Pancreas (tissue), 10 donors: ENCODE measurements at regions of chr5 and their contacts with region 1.

Region 1: DNA sequence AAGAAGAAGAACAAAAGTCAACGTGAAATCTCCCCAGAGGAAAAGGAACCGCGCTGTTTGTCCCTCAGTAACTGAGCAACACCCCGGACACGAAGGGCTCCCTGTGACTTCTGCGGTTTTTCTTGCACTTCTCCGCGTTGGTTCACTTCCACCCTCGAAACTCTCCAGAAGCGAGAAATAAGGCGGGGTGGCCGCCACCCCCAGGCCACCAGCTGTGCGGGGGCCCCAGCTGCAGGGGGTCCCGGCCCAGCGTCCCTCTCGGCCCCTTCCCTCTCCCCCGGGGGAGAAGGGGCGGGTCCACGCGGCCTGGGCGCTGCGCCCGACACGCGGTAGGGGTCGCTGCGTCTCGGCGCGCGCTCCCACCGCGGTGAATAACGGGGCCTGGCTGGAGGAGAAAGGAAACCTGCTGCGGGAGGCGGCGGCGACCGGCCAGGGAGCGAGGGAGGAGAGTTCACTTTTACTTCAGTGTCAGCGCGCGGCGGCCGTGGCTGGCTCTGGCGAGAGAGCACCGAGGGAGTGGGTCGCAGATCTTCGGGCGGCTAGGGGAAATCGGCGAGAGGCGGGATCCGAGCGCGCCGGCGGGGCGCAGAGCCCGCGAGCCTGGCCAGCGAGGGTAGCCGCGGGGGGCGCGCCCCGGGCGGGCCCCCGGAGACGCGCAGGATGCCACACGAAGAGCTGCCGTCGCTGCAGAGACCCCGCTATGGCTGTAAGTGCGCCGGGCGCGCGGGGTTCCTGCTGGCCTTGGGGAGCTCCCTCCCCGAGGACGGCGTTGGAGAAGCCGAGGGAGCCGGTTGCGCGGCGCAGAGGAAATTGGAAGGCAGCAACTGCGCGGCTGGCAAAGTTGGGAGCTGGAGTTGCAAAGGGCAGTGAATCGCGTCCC is at the start of gene IQGAP2:
- DNase-seq: peak; percentile 74 to 91 (median 84)
- ATAC-seq: peak; percentile 73 to 84 (median 77)
- H3K4me3 ChIP-seq: peak within 1 kb of the TSS; percentile 68 to 87 (median 74)
- H3K27ac ChIP-seq: peak within 1 kb of the TSS; percentile 85 to 97 (median 93)
- H3K4me1 ChIP-seq: peaks cover 0 to 27% (median 21%) of the 10 kb centered on the region in 3 donors
- H3K27me3 ChIP-seq: no peaks in the 10 kb centered on the region
- CTCF ChIP-seq: peak; percentile 70 to 83 (median 74)
- total RNA-seq, gene IQGAP2: 32.1 to 54.0 (median 37.3) TPM

Region 2: GRCh38 chr5:76544268-76544926 is 141.3 kb after region 1 on chr5:
- intact Hi-C with region 1: loop called in 1 of 3 experiments (anchors 5 kb)
- DNase-seq: peak in 5 of 6 donors; percentile 62 to 82 (median 74)
- ATAC-seq: peak; percentile 84 to 87 (median 84)
- H3K4me3 ChIP-seq: no peak overlapping the region
- H3K27ac ChIP-seq: peak overlapping the region in 3 of 4 donors; percentile 46 to 65 (median 59)
- H3K4me1 ChIP-seq: peaks cover 34 to 50% (median 39%) of the 10 kb centered on the region in 3 donors
- H3K27me3 ChIP-seq: no peaks in the 10 kb centered on the region
- CTCF ChIP-seq: peak; percentile 15 to 78 (median 56)

Region 3: DNA sequence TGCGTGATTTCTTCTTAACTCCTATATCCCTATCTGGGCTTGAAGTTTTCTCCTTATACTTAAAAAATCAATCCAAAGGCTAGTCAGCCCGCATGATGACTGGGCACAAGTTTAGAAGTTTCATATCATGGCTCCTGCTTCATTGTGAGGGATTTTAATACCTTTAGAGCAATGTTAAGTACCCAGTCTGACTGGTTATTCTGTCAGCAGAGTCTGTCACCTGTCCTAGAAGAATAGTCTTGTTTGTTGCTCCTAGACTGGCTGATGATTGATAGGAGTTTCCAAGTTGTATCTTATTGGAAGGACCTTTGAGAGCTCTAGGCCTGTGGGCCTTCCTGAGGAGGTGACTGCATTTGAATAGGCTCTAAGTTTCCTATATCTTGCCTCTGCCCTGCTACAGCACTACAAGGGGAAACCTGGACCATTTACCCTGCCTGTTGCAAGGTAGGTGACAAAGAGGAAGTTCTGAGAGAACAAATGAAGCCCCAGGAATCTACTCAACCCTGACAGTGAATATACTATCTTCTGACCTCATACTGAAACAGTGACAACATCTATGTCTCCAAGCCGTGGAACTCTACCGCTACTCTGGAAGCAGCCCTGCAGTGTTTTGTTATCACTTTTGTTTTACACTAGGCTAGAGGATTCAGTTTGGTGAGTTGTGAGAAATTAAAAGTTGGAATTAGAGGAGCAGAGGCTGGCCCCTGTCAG is 153.5 kb after region 1 on chr5:
- intact Hi-C with region 1: loop called in 1 of 3 experiments (anchors 10 kb)
- DNase-seq: no peak
- ATAC-seq: peak in 3 of 4 donors; percentile 36 to 39 (median 36)
- H3K4me3 ChIP-seq: no peak overlapping the region
- H3K27ac ChIP-seq: peak overlapping the region in 2 of 4 donors; percentile 2 to 7
- H3K4me1 ChIP-seq: peaks cover 0 to 8% (median 8%) of the 10 kb centered on the region in 3 donors
- H3K27me3 ChIP-seq: no peaks in the 10 kb centered on the region
- CTCF ChIP-seq: no peak